ENCODE measurements at regions of chr4 and their contacts with region 1.

Region 1: GRCh38 chr4:4859390-4859842 is at the start of gene MSX1:
- DNase-seq: peak; percentile 60
- ATAC-seq: peak; percentile 87
- H3K4me3 ChIP-seq: peak within 1 kb of the TSS; percentile 58 to 67
- H3K27ac ChIP-seq: peak within 1 kb of the TSS; percentile 94
- H3K4me1 ChIP-seq: peaks cover 22 to 44% of the 10 kb centered on the region in 2 experiments
- H3K27me3 ChIP-seq: no peaks in the 10 kb centered on the region
- CTCF ChIP-seq: no peak
- POLR2A ChIP-seq: peak; percentile 98
- RAD21 ChIP-seq: no peak
- total RNA-seq, gene MSX1: 59.9 TPM

Region 2: DNA sequence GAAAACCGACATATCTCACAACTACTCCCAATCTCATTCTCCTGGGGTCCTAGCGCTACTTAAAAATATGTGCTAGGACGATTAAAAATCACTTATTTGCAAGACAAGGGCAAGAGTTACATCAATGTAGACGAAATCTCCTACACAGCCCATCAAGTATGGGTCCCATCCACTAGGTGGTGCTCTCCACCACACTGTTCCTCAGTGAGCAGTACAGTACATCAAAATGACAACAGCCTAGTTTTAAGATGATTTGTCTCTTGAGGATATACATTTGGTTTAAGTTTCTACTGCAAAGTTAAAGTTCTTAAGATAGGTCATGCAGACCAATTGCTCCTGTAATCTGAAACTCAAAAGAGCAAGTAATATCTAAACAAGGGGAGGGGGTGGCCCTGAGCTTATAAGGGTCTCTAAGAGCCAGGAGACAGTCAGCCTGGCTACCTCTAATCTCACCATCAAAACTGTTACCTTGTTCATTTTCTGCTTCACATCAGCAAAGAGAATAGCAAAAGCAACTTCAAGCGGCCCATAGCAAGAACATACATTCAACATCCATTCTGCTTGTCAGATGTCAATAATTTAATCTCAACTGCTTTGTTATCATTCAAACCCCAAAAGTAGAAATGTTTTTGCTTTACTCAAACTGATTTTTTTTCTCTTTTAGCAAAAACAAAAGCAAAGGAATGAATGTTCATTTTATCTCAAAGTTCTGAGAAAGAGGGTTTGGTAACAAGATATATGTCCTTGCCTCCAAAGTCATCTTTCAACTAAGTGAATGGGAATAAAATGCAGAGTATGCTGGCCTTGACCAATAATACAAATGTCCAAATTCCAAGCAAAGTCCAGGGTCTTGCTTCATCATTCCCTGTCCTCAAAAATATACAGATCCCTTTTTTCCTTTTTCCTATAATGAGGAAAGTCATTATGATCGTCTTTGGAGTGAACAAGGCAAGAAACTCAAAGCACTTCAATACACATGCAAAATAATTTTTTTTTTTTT is 370.7 kb before region 1 on chr4:
- CTCF ChIA-PET with region 1: no interaction called
- POLR2A ChIA-PET with region 1: no interaction called
- RAD21 ChIA-PET with region 1: interaction called in 1 of 2 experiments, 3 read pairs
- intact Hi-C with region 1: loop called (anchors 5 kb)
- DNase-seq: peak; percentile 60
- ATAC-seq: peak; percentile 99
- H3K4me3 ChIP-seq: no peak overlapping the region
- H3K27ac ChIP-seq: no peak overlapping the region
- H3K4me1 ChIP-seq: no peaks in the 10 kb centered on the region
- H3K27me3 ChIP-seq: no peaks in the 10 kb centered on the region
- CTCF ChIP-seq: peak; percentile 60 to 94 (median 93); a peak in 5 of 6 replicates
- POLR2A ChIP-seq: no peak
- RAD21 ChIP-seq: peak; percentile 86

Region 3: DNA sequence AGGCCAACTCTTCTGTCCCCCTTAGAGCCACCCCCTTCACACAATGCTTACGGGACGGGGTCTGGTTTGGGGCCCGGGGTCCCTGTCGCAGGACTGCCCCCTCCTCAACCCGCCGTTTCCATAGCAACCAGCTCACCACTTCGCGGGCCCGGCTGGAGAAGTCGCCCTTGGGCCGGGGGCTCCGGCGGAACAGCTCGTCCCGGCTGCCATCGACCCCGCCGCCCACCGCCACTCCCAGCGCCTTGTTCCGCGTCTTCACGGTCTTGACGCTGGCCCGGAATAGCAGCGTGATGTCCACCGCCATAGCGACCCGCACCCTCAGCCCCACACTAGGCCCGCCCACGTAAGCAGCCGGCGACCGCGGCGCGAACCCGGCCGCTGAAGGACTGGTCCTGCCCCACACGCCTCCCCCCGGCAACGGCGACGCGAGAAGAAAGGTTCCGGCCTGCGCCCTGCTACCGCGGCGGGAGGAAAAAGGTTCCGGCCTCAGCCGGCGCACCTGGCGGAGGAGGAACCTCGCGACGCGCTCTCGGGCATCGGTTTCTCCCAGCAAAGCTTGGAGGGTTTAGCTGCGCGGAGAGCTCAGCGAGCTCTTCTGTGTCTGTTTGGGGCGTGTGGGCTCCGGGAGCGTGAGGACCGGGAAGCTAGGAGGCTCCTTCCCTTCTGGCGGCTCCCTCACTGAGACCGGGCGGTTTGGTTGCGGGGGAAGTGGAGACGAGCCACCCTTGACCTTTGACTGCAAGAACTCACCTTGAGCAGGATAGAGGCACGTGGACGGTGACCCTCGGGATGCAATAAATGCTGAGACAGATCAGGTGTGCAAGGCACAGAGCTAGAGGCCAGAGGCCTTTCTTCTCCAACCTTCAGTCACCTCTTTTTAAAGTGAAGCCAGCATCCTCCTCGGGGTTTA is 317.5 kb before region 1 on chr4 and contains the start of gene STX18:
- CTCF ChIA-PET with region 1: no interaction called
- POLR2A ChIA-PET with region 1: no interaction called
- RAD21 ChIA-PET with region 1: no interaction called
- intact Hi-C with region 1: loop called (anchors 5 kb)
- DNase-seq: peak; percentile 74
- ATAC-seq: peak; percentile 95
- H3K4me3 ChIP-seq: peak within 1 kb of the TSS; percentile 83 to 94
- H3K27ac ChIP-seq: peak within 1 kb of the TSS; percentile 80
- H3K4me1 ChIP-seq: peaks cover 2 to 18% of the 10 kb centered on the region in 2 experiments; a peak in 3 of 4 replicates
- H3K27me3 ChIP-seq: no peaks in the 10 kb centered on the region
- CTCF ChIP-seq: no peak
- POLR2A ChIP-seq: peak; percentile 77
- RAD21 ChIP-seq: peak; percentile 27; the same call in 1 of the 2 replicates
- total RNA-seq, gene STX18: 18.5 TPM

Region 4: GRCh38 chr4:4677556-4678522 is 181.6 kb before region 1 on chr4:
- CTCF ChIA-PET with region 1: interaction called, 3 read pairs
- POLR2A ChIA-PET with region 1: no interaction called
- RAD21 ChIA-PET with region 1: no interaction called
- intact Hi-C with region 1: loop called (anchors 5 kb)
- DNase-seq: peak; percentile 36
- ATAC-seq: peak; percentile 83
- H3K4me3 ChIP-seq: no peak overlapping the region
- H3K27ac ChIP-seq: no peak overlapping the region
- H3K4me1 ChIP-seq: peaks cover 5 to 11% of the 10 kb centered on the region in 2 experiments
- H3K27me3 ChIP-seq: no peaks in the 10 kb centered on the region
- CTCF ChIP-seq: peak; percentile 56 to 84 (median 80); a peak in 5 of 6 replicates
- POLR2A ChIP-seq: no peak
- RAD21 ChIP-seq: peak; percentile 78

Region 5: DNA sequence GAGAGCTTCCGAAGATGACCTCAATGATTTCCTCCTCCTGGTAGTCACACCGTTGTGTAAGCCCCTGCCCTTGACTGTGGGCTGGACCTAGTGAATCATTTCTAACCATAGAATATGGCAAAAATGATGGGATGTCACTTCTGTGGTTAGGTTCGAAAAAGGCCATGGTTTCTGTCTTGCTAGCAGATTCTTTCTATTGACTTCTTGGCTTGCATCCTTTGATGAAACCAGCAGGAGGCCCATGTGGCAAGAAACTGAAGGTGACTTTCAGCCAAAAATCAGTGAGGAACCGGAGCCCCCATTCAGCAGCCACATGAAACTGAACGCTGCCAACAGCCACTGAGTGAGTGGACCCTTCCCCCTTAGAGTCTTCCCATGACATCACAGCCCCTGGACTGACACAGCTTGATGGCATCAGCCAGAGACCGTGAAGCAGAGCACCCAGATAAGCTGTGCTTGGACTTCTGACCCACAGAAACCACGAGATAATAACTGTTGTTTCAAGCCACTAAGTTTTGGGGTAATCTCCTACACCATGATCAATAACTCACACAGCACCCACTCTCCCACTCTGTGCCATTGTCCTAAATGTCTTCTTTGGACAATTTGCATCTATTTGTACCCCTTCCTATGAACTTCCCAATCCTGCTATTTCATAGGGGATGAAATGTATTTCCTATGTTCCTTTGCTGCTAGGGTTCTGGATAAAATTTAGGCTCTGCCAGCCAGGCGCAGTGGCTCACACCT is 169.5 kb before region 1 on chr4:
- CTCF ChIA-PET with region 1: no interaction called
- POLR2A ChIA-PET with region 1: no interaction called
- RAD21 ChIA-PET with region 1: no interaction called
- intact Hi-C with region 1: no loop called
- DNase-seq: no peak
- ATAC-seq: no peak
- H3K4me3 ChIP-seq: no peak overlapping the region
- H3K27ac ChIP-seq: no peak overlapping the region
- H3K4me1 ChIP-seq: peaks cover 28 to 46% of the 10 kb centered on the region in 2 experiments
- H3K27me3 ChIP-seq: no peaks in the 10 kb centered on the region
- CTCF ChIP-seq: no peak
- POLR2A ChIP-seq: no peak
- RAD21 ChIP-seq: no peak

Region 6: DNA sequence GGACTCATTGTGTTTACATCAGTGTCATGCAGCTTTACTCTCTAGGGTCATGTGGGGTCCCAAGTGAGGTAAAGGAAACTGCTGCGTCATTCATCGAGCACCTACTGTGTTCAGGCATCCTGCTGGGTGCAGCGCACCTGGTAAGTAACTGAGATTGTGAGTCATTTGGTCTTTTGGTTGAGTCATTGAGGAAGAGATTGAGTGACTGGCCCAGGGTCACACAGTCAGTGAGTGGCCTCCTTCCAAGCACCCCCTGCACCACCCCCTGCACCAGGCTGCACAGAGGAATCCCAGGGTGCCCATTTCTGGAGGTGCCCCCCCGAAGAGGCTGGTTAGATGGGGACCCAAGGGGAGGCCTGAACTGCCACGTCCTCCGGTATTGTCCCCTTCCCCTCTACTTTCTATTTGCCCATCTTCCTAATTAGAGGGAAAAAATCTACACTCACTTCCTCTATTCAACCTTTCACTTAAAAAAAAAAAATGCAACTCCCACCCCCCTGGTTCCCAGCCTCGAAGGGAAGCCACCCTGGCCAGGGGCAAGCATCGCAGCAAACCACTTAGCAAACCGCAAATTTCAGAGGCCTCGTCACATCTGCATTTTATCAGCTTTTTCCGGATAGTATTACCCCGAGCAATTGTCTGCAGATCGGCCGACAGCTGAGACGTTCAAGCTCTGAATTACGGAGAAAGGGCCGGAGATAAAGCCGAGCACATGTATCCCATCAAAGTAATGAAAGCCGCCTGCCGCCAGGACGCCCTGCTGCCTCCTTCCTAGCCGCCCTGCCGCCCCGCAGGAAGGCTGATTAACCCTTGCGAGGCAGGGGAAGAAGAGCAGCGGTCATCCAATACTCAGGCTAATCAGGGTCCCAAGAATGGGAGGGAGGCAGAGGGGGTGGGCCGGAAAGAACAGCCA is 96.3 kb before region 1 on chr4:
- CTCF ChIA-PET with region 1: no interaction called
- POLR2A ChIA-PET with region 1: interaction called, 9 read pairs
- RAD21 ChIA-PET with region 1: interaction called in 1 of 2 experiments, 3 read pairs
- intact Hi-C with region 1: loop called (anchors 5 kb)
- DNase-seq: peak; percentile 98
- ATAC-seq: peak; percentile 80
- H3K4me3 ChIP-seq: peak overlapping the region; percentile 21 to 45
- H3K27ac ChIP-seq: peak overlapping the region; percentile 89
- H3K4me1 ChIP-seq: peaks cover 62 to 82% of the 10 kb centered on the region in 2 experiments
- H3K27me3 ChIP-seq: no peaks in the 10 kb centered on the region
- CTCF ChIP-seq: no peak
- POLR2A ChIP-seq: no peak
- RAD21 ChIP-seq: no peak

Region 7: GRCh38 chr4:4914059-4914820 is 54.8 kb after region 1 on chr4:
- CTCF ChIA-PET with region 1: no interaction called
- POLR2A ChIA-PET with region 1: no interaction called
- RAD21 ChIA-PET with region 1: no interaction called
- intact Hi-C with region 1: no loop called
- DNase-seq: no peak
- ATAC-seq: no peak
- H3K4me3 ChIP-seq: no peak overlapping the region
- H3K27ac ChIP-seq: no peak overlapping the region
- H3K4me1 ChIP-seq: no peaks in the 10 kb centered on the region
- H3K27me3 ChIP-seq: 0 out of 2 replicates have a peak, but pooled peaks cover 4% of the 10 kb centered on the region
- CTCF ChIP-seq: no peak
- POLR2A ChIP-seq: no peak
- RAD21 ChIP-seq: no peak

Region 8: GRCh38 chr4:5670156-5671075 is 811.0 kb after region 1 on chr4:
- CTCF ChIA-PET with region 1: no interaction called
- POLR2A ChIA-PET with region 1: no interaction called
- RAD21 ChIA-PET with region 1: no interaction called
- intact Hi-C with region 1: no loop called
- DNase-seq: no peak
- ATAC-seq: no peak
- H3K4me3 ChIP-seq: no peak overlapping the region
- H3K27ac ChIP-seq: no peak overlapping the region
- H3K4me1 ChIP-seq: no peaks in the 10 kb centered on the region
- H3K27me3 ChIP-seq: peaks cover 22% of the 10 kb centered on the region
- CTCF ChIP-seq: no peak
- POLR2A ChIP-seq: no peak
- RAD21 ChIP-seq: no peak

Measured in HCT116 (cell line).